ENCODE measurements at regions of chr19 and their contacts with region 1.

Region 1: GRCh38 chr19:13597640-13598039 is 91.4 kb upstream of the CACNA1A start:
- DNase-seq: peak; percentile 69
- H3K4me3 Mint-ChIP-seq: no peak overlapping the region
- H3K27ac Mint-ChIP-seq: no peak overlapping the region
- H3K4me1 Mint-ChIP-seq: no peaks in the 10 kb centered on the region
- H3K27me3 Mint-ChIP-seq: peaks cover 15% of the 10 kb centered on the region

Region 2: DNA sequence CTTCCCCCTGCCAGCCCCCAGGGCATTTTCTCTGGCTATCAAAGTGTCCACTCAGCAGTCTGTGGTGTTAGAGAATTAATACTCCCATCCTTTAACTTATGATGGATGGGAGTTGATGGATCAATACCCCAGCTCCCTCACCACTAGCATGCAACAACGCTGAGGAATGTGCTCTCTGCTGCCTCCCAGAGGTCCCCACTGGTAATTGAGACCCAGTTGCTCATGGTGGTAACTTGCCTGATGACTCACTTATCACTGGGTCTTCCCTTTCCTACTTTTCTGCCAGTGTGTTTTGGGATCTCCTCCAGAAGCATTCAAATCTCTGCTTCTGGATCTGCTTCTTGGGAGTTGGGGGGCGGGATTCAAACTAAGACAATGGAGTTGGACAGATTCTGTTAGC is 71.1 kb before region 1 on chr19:
- CTCF ChIA-PET with region 1: no interaction called
- intact Hi-C with region 1: no loop called
- DNase-seq: peak; percentile 52
- H3K4me3 Mint-ChIP-seq: no peak overlapping the region
- H3K27ac Mint-ChIP-seq: no peak overlapping the region
- H3K4me1 Mint-ChIP-seq: no peaks in the 10 kb centered on the region
- H3K27me3 Mint-ChIP-seq: peaks cover 26% of the 10 kb centered on the region

Region 3: GRCh38 chr19:13548131-13548530 is 49.5 kb before region 1 on chr19:
- CTCF ChIA-PET with region 1: no interaction called
- intact Hi-C with region 1: no loop called
- DNase-seq: no peak
- H3K4me3 Mint-ChIP-seq: no peak overlapping the region
- H3K27ac Mint-ChIP-seq: no peak overlapping the region
- H3K4me1 Mint-ChIP-seq: no peaks in the 10 kb centered on the region
- H3K27me3 Mint-ChIP-seq: peaks cover 16% of the 10 kb centered on the region

Region 4: DNA sequence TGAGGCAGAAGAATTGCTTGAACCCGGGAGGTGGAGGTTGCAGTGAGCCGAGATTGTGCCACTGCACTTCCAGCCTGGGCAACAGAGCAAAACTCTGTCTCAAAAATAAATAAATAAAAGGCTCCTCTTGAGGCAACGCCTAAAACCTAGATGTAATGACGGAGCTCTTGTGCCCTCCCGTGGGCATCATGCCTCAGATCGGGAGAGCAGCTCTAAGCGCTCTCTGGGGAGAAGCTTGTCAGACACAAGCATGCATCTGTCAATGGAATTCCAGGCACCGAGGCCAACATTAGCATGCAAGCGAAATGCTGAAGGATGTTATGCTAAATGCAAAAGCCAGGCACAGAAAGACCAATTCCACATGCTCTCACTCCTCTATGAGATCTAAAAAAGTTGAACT is 121.1 kb after region 1 on chr19:
- CTCF ChIA-PET with region 1: interaction called, 3 read pairs
- intact Hi-C with region 1: loop called (anchors 1 kb)
- DNase-seq: no peak
- H3K4me3 Mint-ChIP-seq: no peak overlapping the region
- H3K27ac Mint-ChIP-seq: no peak overlapping the region
- H3K4me1 Mint-ChIP-seq: peaks cover 2% of the 10 kb centered on the region
- H3K27me3 Mint-ChIP-seq: peaks cover 13% of the 10 kb centered on the region

Region 5: DNA sequence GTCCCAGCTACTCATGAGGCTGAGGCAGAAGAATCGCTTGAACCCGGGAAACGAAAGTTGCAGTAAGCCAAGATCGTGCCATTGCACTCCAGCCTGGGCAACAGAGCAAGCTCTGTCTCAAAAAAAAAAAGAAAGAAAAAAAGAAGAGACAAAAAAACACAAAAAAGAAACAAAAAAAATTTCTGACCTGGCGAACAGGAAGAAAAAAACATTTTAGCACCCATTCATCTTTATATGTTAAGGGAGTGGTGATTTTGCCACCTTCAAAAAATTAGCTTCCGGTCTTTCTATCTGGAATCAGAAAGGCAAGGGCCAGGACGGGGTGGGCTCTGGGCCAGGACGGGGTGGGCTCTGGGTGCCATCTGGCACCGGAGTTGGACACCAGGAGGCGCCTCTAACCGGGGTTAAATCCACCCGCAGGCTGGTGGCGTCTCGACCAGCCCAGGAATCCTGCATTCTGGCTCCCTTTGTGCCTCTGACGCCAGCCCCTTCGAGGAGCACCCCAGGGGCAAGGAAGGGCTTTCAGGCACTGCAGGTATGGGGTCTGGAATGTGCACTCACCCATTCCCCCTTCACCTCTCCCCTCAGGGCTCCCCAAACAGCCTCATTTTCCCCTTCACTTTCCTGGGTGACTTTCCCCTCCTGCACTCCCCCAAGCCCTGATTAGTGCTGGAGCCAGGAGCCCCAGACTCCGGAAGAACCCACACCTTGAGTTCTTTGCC is 187.3 kb after region 1 on chr19:
- CTCF ChIA-PET with region 1: no interaction called
- intact Hi-C with region 1: loop called (anchors 5 kb)
- DNase-seq: peak; percentile 87
- H3K4me3 Mint-ChIP-seq: peak overlapping the region; percentile 54
- H3K27ac Mint-ChIP-seq: peak overlapping the region; percentile 59
- H3K4me1 Mint-ChIP-seq: peaks cover 55% of the 10 kb centered on the region
- H3K27me3 Mint-ChIP-seq: no peaks in the 10 kb centered on the region

Measured in activated naive CD4-positive, alpha-beta T cell treated with anti-CD3 and anti-CD28 coated beads for 36 hours (primary cell).